Activated CD4-positive, alpha-beta memory T cell treated with anti-CD3 and anti-CD28 coated beads for 36 hours (primary cell): ENCODE measurements at regions of chr2 and their contacts with region 1.

Region 1: DNA sequence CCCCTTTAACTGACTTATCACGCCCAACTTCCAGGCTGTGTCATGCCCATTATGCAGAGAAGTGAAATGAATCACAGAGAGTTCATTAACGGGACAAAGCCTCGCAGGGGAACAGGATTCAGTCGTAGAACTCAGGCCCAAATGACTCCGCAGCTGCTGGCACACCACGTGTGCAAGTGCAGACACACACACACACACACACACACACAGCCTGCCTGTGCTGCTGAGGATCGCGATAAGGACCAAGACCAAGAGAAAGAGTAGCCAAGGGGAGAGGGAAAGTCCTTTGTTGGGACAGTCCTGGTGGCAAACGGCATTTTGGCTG is 90.0 kb upstream of the TAF1B start:
- DNase-seq: peak; percentile 90
- H3K4me3 Mint-ChIP-seq: peak overlapping the region; percentile 68
- H3K27ac Mint-ChIP-seq: peak overlapping the region; percentile 91
- H3K4me1 Mint-ChIP-seq: peaks cover 70% of the 10 kb centered on the region
- H3K27me3 Mint-ChIP-seq: no peaks in the 10 kb centered on the region

Region 2: DNA sequence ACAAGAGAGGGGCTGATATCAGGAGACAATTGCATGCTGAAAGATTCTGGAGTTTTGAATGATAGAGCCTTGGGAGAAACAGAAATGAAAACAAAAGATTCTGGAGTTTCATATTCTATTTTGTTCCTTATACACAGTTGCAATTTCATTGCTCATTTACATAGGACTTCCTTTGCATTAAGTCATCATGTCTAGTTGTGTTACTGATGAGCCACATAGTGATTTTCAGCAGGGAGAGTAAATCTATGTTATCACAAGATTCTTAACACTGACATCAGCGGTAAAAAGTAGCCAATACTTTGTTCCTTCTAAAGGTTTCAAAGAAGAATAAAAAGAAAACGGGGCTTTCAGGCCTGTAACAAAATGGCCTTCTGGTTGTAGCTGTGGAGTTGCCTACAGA is 204.7 kb before region 1 on chr2:
- CTCF ChIA-PET with region 1: no interaction called
- POLR2A ChIA-PET with region 1: interaction called, 3 read pairs
- intact Hi-C with region 1: loop called (anchors 1 kb)
- DNase-seq: no peak
- H3K4me3 Mint-ChIP-seq: peak overlapping the region; percentile 53
- H3K27ac Mint-ChIP-seq: peak overlapping the region; percentile 79
- H3K4me1 Mint-ChIP-seq: peaks cover 69% of the 10 kb centered on the region
- H3K27me3 Mint-ChIP-seq: no peaks in the 10 kb centered on the region

Region 3: DNA sequence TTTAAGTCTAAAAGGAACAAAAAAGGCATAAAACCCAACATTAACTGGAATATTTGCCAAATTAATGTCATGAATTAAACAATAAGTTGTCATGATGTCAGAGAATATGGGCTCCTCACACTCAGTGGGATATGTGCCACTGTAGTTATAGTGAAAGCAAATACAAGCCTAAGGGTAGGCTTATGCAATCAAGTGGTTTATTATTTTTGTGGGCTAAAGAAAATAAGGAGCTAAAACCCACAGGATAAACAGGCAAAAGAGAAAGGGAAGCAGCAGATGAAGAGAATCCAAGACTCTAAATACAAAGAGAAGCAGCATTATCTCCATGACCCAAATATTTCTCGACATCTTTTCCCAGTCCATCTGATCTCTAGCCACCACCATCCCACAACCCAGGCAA is 139.9 kb before region 1 on chr2:
- CTCF ChIA-PET with region 1: interaction called, 5 read pairs
- POLR2A ChIA-PET with region 1: interaction called, 6 read pairs
- intact Hi-C with region 1: loop called (anchors 1 kb)
- DNase-seq: no peak
- H3K4me3 Mint-ChIP-seq: no peak overlapping the region
- H3K27ac Mint-ChIP-seq: no peak overlapping the region
- H3K4me1 Mint-ChIP-seq: peaks cover 90% of the 10 kb centered on the region
- H3K27me3 Mint-ChIP-seq: no peaks in the 10 kb centered on the region

Region 4: GRCh38 chr2:9708683-9709538 is 44.3 kb before region 1 on chr2:
- CTCF ChIA-PET with region 1: interaction called, 6 read pairs
- POLR2A ChIA-PET with region 1: interaction called, 26 read pairs
- intact Hi-C with region 1: loop called (anchors 1 kb)
- DNase-seq: peak; percentile 80
- H3K4me3 Mint-ChIP-seq: no peak overlapping the region
- H3K27ac Mint-ChIP-seq: peak overlapping the region; percentile 93
- H3K4me1 Mint-ChIP-seq: peaks cover 63% of the 10 kb centered on the region
- H3K27me3 Mint-ChIP-seq: no peaks in the 10 kb centered on the region

Region 5: GRCh38 chr2:9770308-9771100 is 17.3 kb after region 1 on chr2:
- CTCF ChIA-PET with region 1: interaction called, 28 read pairs
- POLR2A ChIA-PET with region 1: interaction called, 3 read pairs
- intact Hi-C with region 1: no loop called
- DNase-seq: peak; percentile 74
- H3K4me3 Mint-ChIP-seq: no peak overlapping the region
- H3K27ac Mint-ChIP-seq: no peak overlapping the region
- H3K4me1 Mint-ChIP-seq: peaks cover 23% of the 10 kb centered on the region
- H3K27me3 Mint-ChIP-seq: no peaks in the 10 kb centered on the region